HEK293 (cell line): ENCODE measurements at regions of chr9 and their contacts with region 1.

Region 1: GRCh38 chr9:137217276-137218211 is 4.5 kb downstream of the RNF208 start:
- H3K4me3 ChIP-seq: no peak overlapping the region
- H3K27ac ChIP-seq: no peak overlapping the region
- H3K4me1 ChIP-seq: no peaks in the 10 kb centered on the region; the same call in 1 of the 2 replicates
- CTCF ChIP-seq: peak; percentile 59

Region 2: DNA sequence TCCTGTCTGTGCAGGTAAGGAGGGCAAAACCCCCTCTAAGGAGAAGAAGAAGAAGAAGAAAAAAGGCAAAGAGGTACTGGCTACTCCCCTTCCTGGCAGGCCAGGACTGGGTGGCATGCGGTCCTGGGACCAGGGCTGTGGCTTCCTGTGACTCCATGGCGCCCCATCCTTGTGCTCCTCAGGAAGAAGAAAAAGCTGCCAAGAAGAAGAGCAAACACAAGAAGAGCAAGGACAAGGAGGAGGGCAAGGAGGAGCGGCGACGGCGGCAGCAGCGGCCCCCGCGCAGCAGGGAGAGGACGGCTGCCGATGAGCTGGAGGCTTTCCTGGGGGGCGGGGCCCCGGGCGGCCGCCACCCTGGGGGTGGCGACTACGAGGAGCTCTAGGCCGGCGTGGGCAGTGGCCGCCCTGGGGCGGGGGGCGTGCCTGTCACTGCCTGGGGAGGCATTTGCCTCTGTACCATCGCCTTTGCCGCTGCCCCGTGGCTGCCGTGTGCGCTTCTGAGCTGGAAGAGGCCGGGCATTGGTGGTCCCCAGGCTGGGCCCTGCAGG is 377.3 kb before region 1 on chr9:
- CTCF ChIA-PET with region 1: no interaction called
- POLR2A ChIA-PET with region 1: interaction called, 11 read pairs
- H3K4me3 ChIP-seq: no peak overlapping the region
- H3K27ac ChIP-seq: peak overlapping the region; percentile 22; the same call in 1 of the 2 replicates
- H3K4me1 ChIP-seq: 0 out of 2 replicates have a peak, but pooled peaks cover 5% of the 10 kb centered on the region
- CTCF ChIP-seq: no peak

Region 3: GRCh38 chr9:137348769-137349470 is 131.4 kb after region 1 on chr9:
- CTCF ChIA-PET with region 1: no interaction called
- POLR2A ChIA-PET with region 1: no interaction called
- H3K4me3 ChIP-seq: no peak overlapping the region
- H3K27ac ChIP-seq: no peak overlapping the region
- H3K4me1 ChIP-seq: no peaks in the 10 kb centered on the region
- CTCF ChIP-seq: no peak